ENCODE measurements at regions of chr5 and their contacts with region 1.

Region 1: DNA sequence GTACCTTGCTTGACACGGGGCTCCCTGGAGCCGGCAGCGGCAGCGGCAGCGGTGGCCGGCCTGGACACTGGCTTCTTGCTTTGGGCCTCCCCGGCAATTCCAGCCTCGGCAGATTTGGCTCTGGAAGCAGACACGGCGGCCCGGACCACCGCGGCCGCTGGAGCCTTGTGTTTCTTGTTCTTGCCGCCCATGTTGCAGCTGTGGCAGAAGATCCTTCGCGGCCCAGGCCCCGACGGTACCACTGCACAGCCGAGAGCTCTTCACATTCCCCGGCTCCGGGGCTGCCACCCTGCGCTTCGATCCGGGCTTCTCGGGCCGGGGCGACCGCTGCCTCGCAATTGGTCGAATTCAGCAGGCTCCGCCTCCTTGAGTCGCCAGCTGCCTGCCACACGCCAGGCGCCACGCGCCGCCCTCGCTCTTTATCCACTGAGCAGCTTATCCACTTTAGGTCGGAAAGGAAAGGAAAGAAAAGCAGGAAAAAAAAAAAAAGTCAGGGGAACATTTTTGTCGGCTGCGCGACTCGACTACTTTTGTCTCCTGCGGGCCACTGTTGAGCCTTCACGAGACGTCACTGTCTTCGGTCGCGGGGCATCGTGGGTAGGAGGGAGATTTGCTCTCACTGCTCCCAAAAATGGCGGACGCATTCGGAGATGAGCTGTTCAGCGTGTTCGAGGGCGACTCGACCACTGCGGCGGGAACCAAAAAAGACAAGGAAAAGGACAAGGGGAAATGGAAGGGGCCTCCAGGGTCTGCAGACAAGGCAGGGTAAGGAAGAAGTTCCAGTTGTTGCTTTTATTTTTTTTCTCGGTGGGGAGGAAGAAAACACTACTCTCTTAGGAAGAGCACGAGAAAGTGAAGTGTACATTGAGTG is at the starts of genes DHX29 and MTREX:
- DNase-seq: peak; percentile 78 to 93 (median 86)
- ATAC-seq: peak; percentile 88
- H3K4me3 ChIP-seq: peak within 1 kb of the TSS; percentile 82
- H3K27ac ChIP-seq: peak within 1 kb of the TSS; percentile 98
- H3K4me1 ChIP-seq: peaks cover 3 to 15% of the 10 kb centered on the region in 2 experiments; a peak in 4 of 5 replicates
- H3K27me3 ChIP-seq: no peaks in the 10 kb centered on the region
- CTCF ChIP-seq: no peak
- EP300 ChIP-seq: peak; percentile 24; the same call in 1 of the 2 replicates
- POLR2A ChIP-seq: peak; percentile 96
- RAD21 ChIP-seq: no peak
- polyA plus RNA-seq, gene DHX29: 7.5 to 12.6 TPM
- polyA plus RNA-seq, gene MTREX: 52.9 to 101 TPM

Region 2: DNA sequence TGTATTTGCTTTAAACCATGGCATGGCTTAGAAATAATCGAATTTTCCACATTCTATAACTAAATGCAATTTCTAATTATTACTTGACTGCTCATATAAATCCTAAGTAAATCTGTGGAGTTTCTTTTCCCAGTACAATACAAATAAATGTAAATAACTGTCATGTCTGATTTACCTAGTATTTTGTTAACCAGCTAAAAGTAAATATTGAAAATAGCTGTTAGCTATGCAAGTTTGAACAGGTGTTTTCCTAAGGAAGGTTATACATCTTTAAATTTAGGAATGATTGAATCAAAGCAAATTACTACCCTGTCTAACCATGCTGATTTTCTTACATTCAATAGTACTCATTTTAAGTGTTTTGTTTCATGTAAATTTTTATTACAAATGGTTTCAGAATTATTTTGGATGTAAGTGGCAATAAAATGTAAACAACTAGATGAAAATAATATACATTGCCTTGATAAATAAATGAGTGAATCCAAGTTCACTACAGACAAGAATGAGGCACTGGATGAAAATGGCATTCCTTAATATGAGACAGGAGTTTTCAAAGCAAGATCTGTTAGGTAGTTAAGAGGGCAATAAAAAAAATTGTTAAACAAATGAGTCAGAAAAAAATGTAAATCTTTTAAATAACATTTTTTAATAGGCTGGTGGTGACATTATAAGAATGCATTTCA is 96.3 kb before region 1 on chr5:
- CTCF ChIA-PET with region 1: no interaction called
- POLR2A ChIA-PET with region 1: no interaction called
- in situ Hi-C with region 1: no loop called
- intact Hi-C with region 1: no loop called
- DNase-seq: no peak
- ATAC-seq: no peak
- H3K4me3 ChIP-seq: no peak overlapping the region
- H3K27ac ChIP-seq: no peak overlapping the region
- H3K4me1 ChIP-seq: no peaks in the 10 kb centered on the region
- H3K27me3 ChIP-seq: peaks cover 8 to 10% of the 10 kb centered on the region in 2 experiments
- CTCF ChIP-seq: no peak
- EP300 ChIP-seq: no peak
- POLR2A ChIP-seq: no peak
- RAD21 ChIP-seq: no peak

Region 3: DNA sequence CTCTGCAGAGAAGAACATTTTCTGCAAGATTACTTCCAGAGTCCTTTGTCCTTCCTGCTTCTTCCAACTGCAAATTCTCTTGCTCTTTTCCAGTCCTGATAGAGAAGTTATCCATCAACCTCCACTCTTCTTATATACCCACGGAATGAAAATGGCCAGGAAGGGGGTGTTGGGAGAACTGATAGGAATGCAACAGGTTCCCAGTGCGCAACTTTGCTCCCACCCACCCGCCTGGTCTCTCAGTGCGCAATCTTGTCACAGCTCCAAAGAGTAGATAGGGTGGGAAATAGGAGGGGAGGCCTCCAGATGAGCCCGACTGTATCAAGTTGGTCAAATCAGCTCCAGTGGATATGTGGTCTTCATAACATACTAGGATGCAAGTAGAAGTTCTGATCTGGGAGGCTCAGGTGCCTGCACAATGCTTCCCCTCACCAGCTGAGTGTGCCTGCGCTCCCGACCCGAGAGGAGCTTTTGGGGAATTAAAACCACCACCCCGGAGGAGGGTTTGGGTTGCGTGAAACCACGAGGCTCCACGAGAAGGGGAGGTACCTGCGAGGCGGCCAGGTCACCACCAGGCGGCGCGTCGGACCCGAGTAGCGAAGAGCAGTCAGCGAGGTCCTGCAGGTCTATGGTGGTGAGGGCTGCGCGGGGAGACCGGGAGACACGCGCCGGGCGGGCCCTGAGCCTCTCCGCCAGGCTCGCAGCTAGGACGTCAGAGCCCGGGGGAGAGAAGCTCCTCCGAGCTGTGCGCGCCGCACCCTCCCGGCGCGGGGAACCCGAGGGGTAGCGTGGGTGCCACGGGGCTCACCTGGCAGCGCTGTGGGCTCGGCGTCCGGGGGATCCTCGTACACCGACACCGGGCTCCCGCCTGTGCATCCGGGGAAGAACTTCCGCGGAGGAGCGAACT is 81.3 kb before region 1 on chr5:
- CTCF ChIA-PET with region 1: no interaction called
- POLR2A ChIA-PET with region 1: interaction called, 4 read pairs
- in situ Hi-C with region 1: no loop called
- intact Hi-C with region 1: loop called (anchors 5 kb)
- DNase-seq: peak; percentile 83 to 90 (median 88)
- ATAC-seq: peak; percentile 93
- H3K4me3 ChIP-seq: peak overlapping the region; percentile 71
- H3K27ac ChIP-seq: peak overlapping the region; percentile 55; the same call in 1 of the 3 replicates
- H3K4me1 ChIP-seq: peaks cover 6 to 25% of the 10 kb centered on the region in 2 experiments; a peak in 3 of 5 replicates
- H3K27me3 ChIP-seq: peaks cover 9 to 12% of the 10 kb centered on the region in 2 experiments; a peak in 4 of 5 replicates
- CTCF ChIP-seq: peak; percentile 83 to 92 (median 88)
- EP300 ChIP-seq: no peak
- POLR2A ChIP-seq: peak; percentile 53; the same call in 1 of the 2 replicates
- RAD21 ChIP-seq: peak; percentile 51 to 83